Transverse colon (tissue), 4 donors: ENCODE measurements at regions of chr3 and their contacts with region 1.

Region 1: DNA sequence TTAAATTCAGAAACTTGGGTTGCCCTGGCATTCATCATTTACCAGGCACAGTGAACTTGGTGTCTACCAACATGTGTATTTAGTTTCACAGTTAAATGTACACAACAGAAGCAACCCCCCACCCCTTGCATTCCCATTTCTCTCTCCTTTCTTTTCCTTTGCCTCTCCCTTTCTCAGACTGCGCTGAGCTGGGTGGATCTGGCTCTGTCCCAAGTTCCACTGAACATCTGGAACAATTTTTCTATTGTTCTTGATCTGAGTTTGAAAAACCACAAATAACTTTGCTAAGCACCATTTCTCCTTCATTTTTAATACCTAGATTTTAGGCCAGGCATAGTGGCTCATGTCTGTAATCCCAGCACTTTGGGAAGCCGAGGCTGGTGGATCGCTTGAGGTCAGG is 242.2 kb downstream of the ABHD5 start:
- DNase-seq: no peak
- H3K4me3 ChIP-seq: no peak overlapping the region
- H3K27ac ChIP-seq: no peak overlapping the region
- H3K4me1 ChIP-seq: no peaks in the 10 kb centered on the region
- H3K27me3 ChIP-seq: no peaks in the 10 kb centered on the region
- CTCF ChIP-seq: no peak
- EP300 ChIP-seq: no peak
- POLR2A ChIP-seq: no peak

Region 2: DNA sequence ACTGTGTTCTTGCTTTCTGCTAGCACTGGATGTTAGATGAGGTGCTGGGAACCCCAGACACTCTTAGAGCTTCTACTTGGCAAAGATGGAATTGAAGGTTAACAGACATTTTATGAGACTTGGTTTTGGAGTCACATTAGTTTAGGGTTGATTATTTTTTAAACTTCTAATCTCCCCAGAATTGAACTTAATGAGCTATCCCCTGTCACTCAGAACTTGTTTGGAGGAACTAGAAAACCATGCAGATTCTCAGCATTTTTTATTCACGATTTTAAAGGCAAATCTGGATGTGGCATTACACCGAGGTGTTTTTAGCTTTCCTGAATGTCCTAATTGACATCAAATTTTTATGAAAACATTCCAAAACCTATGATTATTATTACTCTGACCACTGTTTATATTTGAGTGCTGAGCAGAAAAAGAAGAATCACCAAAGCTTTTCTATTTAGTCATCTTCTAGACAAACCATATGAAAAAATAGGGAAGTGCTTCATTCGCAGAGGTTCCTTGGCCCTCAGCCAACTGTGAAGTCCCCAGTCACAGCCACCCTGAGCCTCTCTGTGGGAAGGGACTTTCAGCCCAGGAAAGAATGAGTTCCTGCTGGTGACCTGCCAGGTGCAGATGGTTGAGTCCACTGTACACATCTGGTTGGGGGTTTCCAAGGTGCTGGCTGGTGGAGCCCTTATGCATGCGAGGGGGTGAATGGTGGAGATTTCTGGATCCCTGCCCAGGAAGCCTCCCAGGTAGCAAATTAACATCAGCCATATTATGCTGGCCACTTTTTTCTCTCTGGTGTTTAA is 112.8 kb after region 1 on chr3:
- in situ Hi-C with region 1: loop called in 1 of 4 experiments (anchors 25 kb)
- intact Hi-C with region 1: no loop called
- DNase-seq: peak; percentile 63
- H3K4me3 ChIP-seq: no peak overlapping the region
- H3K27ac ChIP-seq: no peak overlapping the region
- H3K4me1 ChIP-seq: no peaks in the 10 kb centered on the region
- H3K27me3 ChIP-seq: peaks cover under 1% of the 10 kb centered on the region
- CTCF ChIP-seq: no peak
- EP300 ChIP-seq: no peak
- POLR2A ChIP-seq: no peak

Region 3: GRCh38 chr3:44223299-44223698 is 290.4 kb after region 1 on chr3:
- in situ Hi-C with region 1: no loop called
- intact Hi-C with region 1: no loop called
- DNase-seq: no peak
- H3K4me3 ChIP-seq: no peak overlapping the region
- H3K27ac ChIP-seq: no peak overlapping the region
- H3K4me1 ChIP-seq: no peaks in the 10 kb centered on the region
- H3K27me3 ChIP-seq: peaks cover 18% of the 10 kb centered on the region
- CTCF ChIP-seq: no peak
- EP300 ChIP-seq: no peak
- POLR2A ChIP-seq: no peak

Region 4: GRCh38 chr3:44729384-44729910 is 796.5 kb after region 1 on chr3 and contains the start of gene ZNF501:
- in situ Hi-C with region 1: no loop called
- intact Hi-C with region 1: no loop called
- DNase-seq: peak; percentile 96
- H3K4me3 ChIP-seq: peak within 1 kb of the TSS; percentile 52 to 88 (median 64)
- H3K27ac ChIP-seq: peak within 1 kb of the TSS; percentile 54 to 67 (median 58)
- H3K4me1 ChIP-seq: peaks cover 0 to 13% (median 7%) of the 10 kb centered on the region in 4 donors
- H3K27me3 ChIP-seq: no peaks in the 10 kb centered on the region
- CTCF ChIP-seq: no peak
- EP300 ChIP-seq: no peak
- POLR2A ChIP-seq: peak; percentile 42
- total RNA-seq, gene ZNF501: 1.1 to 4.8 (median 2.6) TPM in 3 of 4 donors, not detected in the other

Region 5: DNA sequence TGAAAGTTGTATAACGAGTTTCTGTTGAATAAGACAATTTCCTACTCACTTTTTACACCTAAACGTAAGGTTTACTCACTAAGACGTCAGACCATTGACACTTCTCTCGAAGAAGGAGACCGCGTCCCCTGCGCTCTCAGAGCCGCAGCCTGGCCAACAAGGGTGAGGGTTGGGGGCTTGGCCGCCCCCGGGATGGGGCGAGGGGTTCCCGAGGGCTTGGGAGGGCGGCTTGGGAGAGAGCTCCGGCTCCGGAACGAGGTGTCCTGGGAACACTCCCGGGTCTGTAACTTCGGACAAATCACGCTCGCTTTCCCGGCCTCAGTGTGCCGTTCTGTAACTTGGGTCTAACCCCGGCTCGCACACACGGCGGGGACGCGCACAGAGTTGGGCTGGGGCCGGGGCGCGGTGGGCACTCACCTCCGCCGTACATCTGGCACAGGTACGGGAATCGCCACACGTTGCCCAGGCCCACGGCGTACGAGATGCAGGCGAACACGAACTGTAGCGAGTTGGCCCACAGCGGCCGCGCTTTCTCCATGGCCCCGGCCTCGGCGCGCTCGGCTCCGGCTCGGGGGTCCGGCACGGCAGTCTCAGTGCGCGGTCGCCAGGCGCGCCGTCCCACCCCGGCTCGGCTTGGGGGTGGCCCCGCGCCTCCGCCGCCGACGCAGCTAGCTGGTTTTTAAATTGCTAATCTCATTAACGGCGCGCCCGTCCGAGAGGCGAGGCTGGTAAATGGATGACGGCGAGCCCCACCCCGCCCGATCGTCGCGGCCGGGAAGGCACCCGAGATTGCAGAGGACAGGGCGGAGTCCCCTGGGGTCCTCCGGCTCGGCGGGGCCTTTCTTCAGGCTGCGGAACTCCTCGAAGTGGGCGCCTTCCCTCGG is 1863.2 kb after region 1 on chr3 and contains the start of gene SLC6A20:
- in situ Hi-C with region 1: no loop called
- intact Hi-C with region 1: no loop called
- DNase-seq: peak; percentile 58
- H3K4me3 ChIP-seq: peak within 1 kb of the TSS; percentile 9 to 46 (median 28)
- H3K27ac ChIP-seq: no peak within 1 kb of the TSS
- H3K4me1 ChIP-seq: peaks cover 6 to 10% (median 10%) of the 10 kb centered on the region in 4 donors
- H3K27me3 ChIP-seq: peaks cover 47% of the 10 kb centered on the region
- CTCF ChIP-seq: no peak
- EP300 ChIP-seq: no peak
- POLR2A ChIP-seq: no peak
- total RNA-seq, gene SLC6A20: 0.32 to 0.41 TPM in 2 of 4 donors, not detected in the others